Sciatic nerve (tissue), 2 donors: ENCODE measurements at regions of chr7 and their contacts with region 1.

Region 1: DNA sequence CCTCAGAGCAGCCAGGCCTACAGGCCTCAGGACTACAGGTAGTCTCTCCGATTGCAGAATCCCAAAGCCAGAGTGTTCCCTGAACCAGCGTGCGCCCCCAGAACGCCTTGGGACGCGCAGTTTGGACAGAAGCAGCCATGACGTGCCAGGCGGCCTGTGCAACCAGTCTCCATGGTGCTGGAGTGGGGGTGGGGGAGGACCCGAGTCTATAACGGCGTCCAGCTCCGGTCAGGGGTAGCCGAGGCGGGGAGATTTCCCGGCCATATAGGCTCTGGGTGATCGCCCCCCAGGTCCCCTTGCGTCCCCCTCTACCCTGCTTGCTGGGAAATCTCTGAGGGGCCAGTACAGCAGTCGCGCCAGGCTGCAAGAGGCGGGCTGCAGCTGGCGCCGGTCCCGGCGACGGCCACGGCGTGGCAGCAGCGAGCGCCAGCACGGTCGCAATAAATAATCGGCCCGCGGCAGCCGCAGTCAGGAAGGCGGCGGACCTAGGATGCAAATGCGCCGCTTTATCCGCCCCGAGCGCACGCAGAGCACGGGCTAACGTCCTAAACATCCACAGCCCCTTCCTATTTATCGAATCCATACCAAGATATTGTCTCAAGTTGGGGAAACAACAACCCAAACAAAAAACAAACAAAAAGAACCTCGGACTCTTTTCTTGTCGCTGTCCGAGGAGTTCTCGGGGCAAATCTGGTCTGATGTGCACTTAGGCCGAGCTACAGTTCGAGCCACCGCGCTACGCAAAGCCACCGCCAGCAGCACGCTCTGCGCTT is 1.6 kb downstream of the HOXA3 start:
- DNase-seq: peak; percentile 86
- ATAC-seq: peak; percentile 65

Region 2: DNA sequence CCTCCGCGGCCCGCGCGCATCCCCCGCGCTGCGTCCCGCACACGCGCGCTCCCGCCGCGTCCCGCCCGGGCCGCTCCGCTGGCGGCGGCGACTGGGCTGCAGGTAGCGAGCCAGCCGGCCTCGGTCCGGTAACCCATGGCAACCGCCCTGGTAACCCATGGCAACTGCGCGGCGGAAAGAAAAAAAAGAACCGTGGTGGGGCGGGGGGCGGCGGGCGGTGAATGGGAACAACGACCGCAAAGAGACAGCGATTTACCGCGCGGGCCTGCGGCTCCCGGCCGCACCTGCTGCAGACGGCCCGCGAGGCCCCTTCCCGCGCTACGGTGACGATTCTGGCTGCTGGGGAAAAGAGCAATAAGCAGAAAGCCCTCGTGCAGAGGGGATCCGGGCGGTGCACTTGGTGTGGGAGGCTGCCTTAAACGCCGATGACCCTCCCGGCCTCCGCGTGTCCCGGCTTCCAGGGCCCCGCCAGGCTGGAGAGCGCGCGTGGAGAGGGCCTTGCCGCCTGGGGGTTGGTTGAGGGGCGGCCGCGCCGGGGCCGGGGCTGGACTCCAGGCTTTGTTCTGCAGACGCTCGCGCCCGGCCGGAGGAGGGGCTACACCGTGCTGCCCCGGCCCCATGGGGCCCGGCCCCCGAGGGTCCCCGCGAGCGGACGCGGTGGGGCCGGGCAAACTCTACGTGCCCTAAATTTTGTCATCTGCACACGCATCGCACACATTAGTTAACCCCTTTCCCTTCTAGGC is 774.4 kb before region 1 on chr7:
- intact Hi-C with region 1: loop called (anchors 10 kb)
- DNase-seq: no peak
- ATAC-seq: peak; percentile 49

Region 3: GRCh38 chr7:27834179-27834921 is 683.6 kb after region 1 on chr7:
- intact Hi-C with region 1: no loop called
- DNase-seq: no peak
- ATAC-seq: no peak